PC-3 (cell line): ENCODE measurements at regions of chr4 and their contacts with region 1.

Region 1: DNA sequence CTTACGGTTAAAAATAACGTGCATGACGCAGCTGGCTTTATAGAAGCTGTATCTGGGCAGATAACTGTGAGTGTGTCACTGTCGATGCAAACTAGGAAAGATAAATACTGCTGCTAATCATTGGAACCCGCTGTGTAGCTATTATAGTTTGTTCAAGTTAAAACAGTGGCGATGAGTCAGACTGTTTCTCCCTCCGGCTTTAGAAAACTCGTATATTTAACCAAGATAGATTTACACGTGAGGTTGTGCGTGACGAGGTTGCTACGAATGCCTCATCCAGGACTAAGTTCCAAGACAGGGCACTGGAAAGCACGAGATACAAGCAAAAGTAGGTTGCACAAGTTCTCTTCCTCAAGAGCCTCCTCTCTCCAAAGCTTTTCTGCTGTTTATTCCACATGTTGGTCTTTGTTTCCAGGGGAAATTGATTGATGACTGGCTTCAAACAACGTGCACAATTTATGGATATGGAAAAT is 270.7 kb downstream of the FBXW7 start:
- DNase-seq: peak; percentile 94
- ATAC-seq: peak; percentile 98
- H3K4me3 ChIP-seq: peak overlapping the region; percentile 14; the same call in 1 of the 2 replicates
- H3K27ac ChIP-seq: peak overlapping the region; percentile 92
- H3K4me1 ChIP-seq: peaks cover 19% of the 10 kb centered on the region
- H3K27me3 ChIP-seq: no peaks in the 10 kb centered on the region
- CTCF ChIP-seq: no peak

Region 2: DNA sequence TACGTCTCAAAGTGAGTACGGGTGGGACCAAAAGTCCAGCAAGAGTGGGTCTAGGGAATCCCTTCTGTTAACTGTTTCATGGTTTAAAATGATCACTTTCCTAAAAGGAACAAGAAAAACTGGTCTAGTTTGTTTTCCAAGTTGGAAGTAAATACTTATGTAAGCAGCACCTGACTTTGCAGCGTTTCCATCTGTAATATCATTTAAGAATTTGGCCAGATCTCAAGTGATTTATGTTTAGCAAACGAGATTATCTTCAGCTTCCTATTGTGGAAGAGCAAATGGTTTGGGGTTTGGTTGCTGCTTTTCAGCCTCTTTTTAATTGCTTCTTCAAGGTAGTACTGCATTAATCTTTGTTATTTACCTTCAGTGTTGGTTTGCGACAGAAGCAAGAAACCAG is 805.8 kb before region 1 on chr4:
- CTCF ChIA-PET with region 1: no interaction called
- POLR2A ChIA-PET with region 1: no interaction called
- intact Hi-C with region 1: no loop called
- DNase-seq: peak; percentile 54
- ATAC-seq: no peak
- H3K4me3 ChIP-seq: no peak overlapping the region
- H3K27ac ChIP-seq: no peak overlapping the region
- H3K4me1 ChIP-seq: peaks cover 14% of the 10 kb centered on the region
- H3K27me3 ChIP-seq: no peaks in the 10 kb centered on the region
- CTCF ChIP-seq: no peak

Region 3: GRCh38 chr4:152310262-152310661 is 45.1 kb after region 1 on chr4:
- CTCF ChIA-PET with region 1: no interaction called
- POLR2A ChIA-PET with region 1: no interaction called
- intact Hi-C with region 1: loop called (anchors 5 kb)
- DNase-seq: peak; percentile 88
- ATAC-seq: peak; percentile 63
- H3K4me3 ChIP-seq: no peak overlapping the region
- H3K27ac ChIP-seq: peak overlapping the region; percentile 65
- H3K4me1 ChIP-seq: peaks cover 40% of the 10 kb centered on the region
- H3K27me3 ChIP-seq: no peaks in the 10 kb centered on the region
- CTCF ChIP-seq: no peak

Region 4: GRCh38 chr4:152352622-152353116 is 87.5 kb after region 1 on chr4:
- CTCF ChIA-PET with region 1: no interaction called
- POLR2A ChIA-PET with region 1: no interaction called
- intact Hi-C with region 1: loop called (anchors 5 kb)
- DNase-seq: peak; percentile 87
- ATAC-seq: peak; percentile 99
- H3K4me3 ChIP-seq: peak overlapping the region; percentile 68
- H3K27ac ChIP-seq: peak overlapping the region; percentile 9; the same call in 1 of the 2 replicates
- H3K4me1 ChIP-seq: 0 out of 2 replicates have a peak, but pooled peaks cover 5% of the 10 kb centered on the region
- H3K27me3 ChIP-seq: no peaks in the 10 kb centered on the region
- CTCF ChIP-seq: no peak